Common myeloid progenitor, CD34-positive (primary cell): ENCODE measurements at regions of chr17 and their contacts with region 1.

Region 1: DNA sequence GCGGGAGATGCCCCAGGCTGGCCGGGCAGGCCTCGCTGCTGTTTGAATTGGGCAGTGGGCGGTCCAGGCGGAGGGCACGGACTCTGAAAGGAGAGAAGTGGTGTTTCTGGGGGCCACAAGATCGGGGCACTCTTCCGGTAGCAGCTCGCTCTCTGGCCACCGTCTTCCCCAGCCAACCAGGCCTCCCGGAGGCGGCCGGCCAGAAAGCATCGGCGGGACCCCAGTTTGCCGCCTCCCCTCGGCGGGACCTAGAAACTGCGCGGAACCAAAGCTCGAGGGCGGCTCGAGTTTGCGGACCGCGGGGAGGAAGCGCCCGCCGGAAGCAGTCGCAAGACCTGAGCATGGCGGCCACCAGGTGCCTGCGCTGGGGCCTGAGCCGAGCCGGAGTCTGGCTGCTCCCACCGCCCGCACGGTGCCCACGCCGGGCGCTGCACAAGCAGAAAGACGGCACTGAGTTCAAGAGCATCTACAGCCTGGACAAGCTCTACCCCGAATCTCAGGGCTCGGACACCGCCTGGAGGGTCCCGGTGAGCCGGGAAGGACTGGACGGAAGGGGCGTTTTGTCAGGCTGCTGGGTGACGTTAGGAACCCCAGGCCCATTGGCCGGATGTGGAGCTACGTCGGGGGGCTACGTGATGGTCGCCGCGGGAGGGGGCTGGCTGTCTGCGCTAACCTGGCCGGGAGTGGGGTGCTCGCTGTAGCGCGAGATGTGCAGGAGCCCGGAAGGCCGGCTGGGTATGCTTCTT is at the start of gene MRPL58:
- DNase-seq: peak; percentile 88 to 94 (median 92)
- H3K4me3 ChIP-seq: peak within 1 kb of the TSS; percentile 53 to 94 (median 87)
- H3K27ac ChIP-seq: peak within 1 kb of the TSS; percentile 76 to 84
- H3K4me1 ChIP-seq: peaks cover 8 to 29% (median 17%) of the 10 kb centered on the region in 4 experiments
- H3K27me3 ChIP-seq: no peaks in the 10 kb centered on the region

Region 2: DNA sequence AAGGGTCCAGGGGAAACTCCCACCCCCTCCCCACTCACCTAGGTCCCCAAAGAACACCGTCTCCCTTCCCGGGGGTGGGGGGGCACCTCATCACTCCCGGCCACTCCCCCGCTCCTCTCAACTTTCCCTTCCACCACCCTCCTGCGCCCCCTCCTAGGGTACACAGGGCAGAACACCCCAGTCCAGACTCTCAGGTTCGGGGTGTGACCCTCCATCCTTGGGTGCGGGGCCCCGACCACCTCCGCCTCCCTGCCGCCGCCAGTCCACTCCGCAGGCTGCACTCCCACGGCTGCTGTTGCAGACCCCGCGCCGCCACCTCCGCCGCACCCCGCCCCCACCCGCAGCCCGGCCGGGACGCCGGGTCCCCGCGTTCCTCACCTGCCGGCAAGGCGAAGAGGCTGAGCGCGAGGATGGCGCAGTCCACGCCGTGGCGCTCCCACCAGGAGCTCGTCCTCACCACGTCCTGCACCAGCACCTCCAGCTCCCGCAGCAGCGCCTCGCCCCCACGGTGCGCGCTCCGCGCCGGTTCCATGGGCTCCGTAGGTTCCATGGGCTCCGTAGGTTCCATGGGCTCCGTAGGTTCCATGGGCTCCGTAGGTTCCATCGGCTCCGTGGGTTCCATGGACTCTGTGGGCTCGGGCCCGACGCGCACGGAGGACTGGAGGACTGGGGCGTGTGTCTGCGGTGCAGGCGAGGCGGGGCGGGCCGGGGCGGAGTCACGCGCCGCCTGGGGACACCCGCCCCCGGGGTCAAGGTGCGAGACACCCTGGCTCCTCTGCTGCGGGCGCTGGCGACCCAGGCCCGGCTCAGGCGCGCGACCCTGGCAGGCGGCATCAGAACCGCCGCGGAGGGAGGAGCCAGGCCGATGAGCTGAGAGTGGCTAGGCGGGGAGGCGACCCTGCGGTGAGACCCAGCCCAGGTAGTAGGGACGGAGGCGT is 119.3 kb before region 1 on chr17 and contains the start of gene FADS6:
- CTCF ChIA-PET with region 1: no interaction called
- POLR2A ChIA-PET with region 1: no interaction called
- DNase-seq: peak in 2 of 3 donors; percentile 33 to 49
- H3K4me3 ChIP-seq: peak within 1 kb of the TSS in 6 of 7 experiments; percentile 15 to 67 (median 45)
- H3K27ac ChIP-seq: no peak within 1 kb of the TSS
- H3K4me1 ChIP-seq: peaks cover 0 to 18% (median 7%) of the 10 kb centered on the region in 4 experiments
- H3K27me3 ChIP-seq: peaks cover 0 to 53% (median 30%) of the 10 kb centered on the region in 5 experiments

Region 3: GRCh38 chr17:74987418-74987908 is 25.1 kb before region 1 on chr17 and contains the start of gene CDR2L:
- CTCF ChIA-PET with region 1: interaction called, 21 read pairs
- POLR2A ChIA-PET with region 1: interaction called, 13 read pairs
- DNase-seq: peak; percentile 92 to 94 (median 93)
- H3K4me3 ChIP-seq: peak within 1 kb of the TSS; percentile 49 to 83 (median 62)
- H3K27ac ChIP-seq: no peak within 1 kb of the TSS
- H3K4me1 ChIP-seq: peaks cover 0 to 23% (median 22%) of the 10 kb centered on the region in 4 experiments
- H3K27me3 ChIP-seq: peaks cover 0 to 28% (median 7%) of the 10 kb centered on the region in 5 experiments

Region 4: DNA sequence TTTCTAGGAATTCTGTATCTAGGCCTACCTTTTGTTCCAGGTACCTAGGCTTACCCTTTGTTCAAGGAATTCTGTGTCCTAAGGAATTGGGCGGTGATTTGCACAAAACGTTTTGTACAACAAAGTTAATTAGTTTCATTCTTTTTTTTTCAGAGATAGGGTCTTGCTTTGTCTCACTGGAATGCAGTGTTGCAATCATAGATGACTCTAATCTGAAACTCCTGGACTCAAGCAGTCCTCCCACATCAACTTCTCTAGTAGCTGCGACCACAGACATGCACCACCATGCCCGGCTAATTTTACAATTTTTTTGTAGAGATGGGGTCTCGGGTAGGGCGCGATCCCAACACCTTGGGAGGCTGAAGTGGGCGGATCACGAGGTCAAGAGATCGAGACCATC is 18.0 kb before region 1 on chr17:
- CTCF ChIA-PET with region 1: interaction called, 26 read pairs
- POLR2A ChIA-PET with region 1: no interaction called
- DNase-seq: no peak
- H3K4me3 ChIP-seq: no peak overlapping the region
- H3K27ac ChIP-seq: no peak overlapping the region
- H3K4me1 ChIP-seq: no peaks in the 10 kb centered on the region
- H3K27me3 ChIP-seq: peaks cover 0 to 12% (median 0%) of the 10 kb centered on the region in 5 experiments

Region 5: DNA sequence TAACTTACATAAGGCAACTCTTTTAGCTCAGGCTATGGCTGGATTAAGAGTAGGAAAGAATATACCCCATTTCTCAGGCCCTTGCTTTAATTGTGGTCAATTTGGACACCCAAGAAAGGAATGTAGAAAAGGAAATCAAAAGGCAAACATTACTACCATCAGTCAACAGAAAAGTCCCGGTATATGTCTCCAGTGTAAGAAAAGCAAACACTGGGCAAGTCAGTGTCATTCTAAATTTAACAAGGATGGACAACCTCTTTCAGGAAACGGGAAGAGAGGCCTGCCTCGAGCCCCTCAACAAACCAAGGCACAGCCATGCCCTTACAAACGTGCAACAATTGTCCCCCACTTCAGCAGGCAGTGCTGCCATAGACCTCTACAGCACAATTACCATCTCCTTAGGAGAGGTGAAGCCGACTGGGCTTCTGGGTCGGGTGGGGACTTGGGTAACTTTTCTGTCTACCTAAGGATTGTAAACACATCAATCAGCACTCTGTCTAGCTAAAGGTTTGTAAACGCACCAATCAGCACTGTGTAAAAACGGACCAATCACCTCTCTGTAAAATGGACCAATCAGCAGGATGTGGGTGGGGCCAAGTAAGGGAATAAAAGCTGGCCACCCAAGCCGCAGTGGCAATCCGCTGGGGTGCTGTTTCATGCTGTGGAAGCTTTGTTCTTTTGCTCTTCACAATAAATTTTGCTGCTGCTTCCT is 12.3 kb after region 1 on chr17:
- CTCF ChIA-PET with region 1: interaction called, 23 read pairs
- POLR2A ChIA-PET with region 1: interaction called, 6 read pairs
- DNase-seq: peak in 1 of 3 donors; percentile 26
- H3K4me3 ChIP-seq: no peak overlapping the region
- H3K27ac ChIP-seq: no peak overlapping the region
- H3K4me1 ChIP-seq: no peaks in the 10 kb centered on the region
- H3K27me3 ChIP-seq: no peaks in the 10 kb centered on the region

Region 6: DNA sequence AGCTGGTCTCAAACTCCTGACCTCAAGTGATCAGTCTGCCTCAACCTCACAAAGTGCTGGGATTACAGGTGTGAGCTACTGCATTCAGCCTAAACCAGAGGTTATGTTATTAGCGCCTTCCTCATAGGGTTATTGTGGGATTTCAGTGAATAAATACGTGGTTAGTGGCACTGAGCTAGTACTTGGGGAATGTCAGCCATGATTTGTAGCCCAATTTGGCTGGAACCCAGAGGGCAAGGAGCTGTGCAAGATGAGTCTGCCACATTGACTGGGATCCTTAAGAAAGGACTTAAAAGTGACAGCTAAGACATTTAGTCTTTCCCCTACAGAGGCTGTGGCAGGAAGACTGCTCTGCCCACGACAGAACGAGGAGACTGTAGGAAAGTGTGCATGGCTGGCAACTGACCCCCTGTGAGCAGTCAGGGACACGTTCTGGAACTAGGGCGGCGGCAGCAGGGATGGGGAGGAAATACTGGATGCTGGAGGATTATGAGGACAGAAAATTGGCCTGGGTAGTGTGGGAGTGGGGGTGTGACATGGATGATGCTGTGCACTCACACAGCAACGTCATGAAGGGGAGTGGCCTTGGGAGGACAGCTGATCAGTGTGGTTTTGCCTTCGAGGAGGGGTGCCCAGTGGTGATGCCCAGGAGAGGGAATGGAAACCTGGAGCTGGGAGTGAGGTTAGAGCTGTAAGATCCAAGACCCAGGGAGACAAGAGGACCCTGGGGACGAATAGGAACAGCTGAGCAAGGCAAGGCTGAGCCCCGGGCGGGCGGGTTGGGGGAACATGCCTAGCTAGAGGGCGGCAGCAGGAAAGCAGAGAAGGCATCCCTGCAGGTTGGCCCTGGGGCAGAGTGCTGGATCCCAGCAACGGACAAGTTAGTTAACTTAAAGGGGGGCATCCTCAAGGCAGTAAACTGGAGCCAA is 19.7 kb after region 1 on chr17:
- CTCF ChIA-PET with region 1: interaction called, 16 read pairs
- POLR2A ChIA-PET with region 1: interaction called, 5 read pairs
- DNase-seq: peak; percentile 72 to 86 (median 79)
- H3K4me3 ChIP-seq: peak overlapping the region; percentile 11 to 95 (median 91)
- H3K27ac ChIP-seq: no peak overlapping the region
- H3K4me1 ChIP-seq: peaks cover 4 to 43% (median 36%) of the 10 kb centered on the region in 4 experiments
- H3K27me3 ChIP-seq: no peaks in the 10 kb centered on the region

Region 7: DNA sequence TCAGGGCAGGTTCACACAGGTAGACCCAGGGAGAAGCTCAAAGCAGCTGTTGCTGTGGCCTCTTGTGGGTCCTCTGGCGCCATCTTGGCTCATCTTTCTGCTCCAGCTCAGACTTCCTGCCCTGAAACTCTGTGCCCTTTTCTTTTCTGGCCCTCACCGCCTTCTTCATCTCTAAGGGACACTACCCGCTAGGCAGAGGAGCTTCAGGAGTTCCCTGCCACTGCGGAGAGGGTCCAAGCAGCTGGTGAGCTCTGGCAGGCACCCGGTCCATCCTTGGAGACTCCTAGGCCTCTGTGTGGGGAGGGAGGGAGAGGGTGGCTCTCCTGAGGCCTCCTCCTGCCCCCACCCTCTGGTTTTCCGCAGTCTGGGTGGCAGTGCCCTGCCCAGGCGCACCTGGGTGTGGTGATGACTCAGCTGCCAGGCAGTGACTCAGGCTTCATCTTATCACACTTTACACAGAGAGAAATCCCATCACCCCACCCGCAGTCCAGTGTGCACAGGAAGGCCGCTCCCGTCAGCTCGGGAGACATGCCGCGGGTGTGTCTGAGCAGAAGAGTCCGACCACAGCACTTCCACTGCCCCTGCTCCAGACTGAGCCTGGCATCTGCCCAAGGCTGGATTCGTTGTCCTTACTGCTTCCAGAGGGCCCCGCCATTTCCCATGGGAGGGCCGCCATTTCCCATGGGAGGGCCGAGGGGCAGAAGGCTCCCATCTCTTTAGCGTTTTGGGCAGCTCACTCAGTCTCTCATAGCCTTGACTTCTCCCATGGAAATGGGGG is 111.7 kb after region 1 on chr17:
- CTCF ChIA-PET with region 1: no interaction called
- POLR2A ChIA-PET with region 1: no interaction called
- DNase-seq: peak; percentile 94 to 97 (median 96)
- H3K4me3 ChIP-seq: peak overlapping the region in 2 of 7 experiments; percentile 28 to 49
- H3K27ac ChIP-seq: peak overlapping the region; percentile 64 to 85
- H3K4me1 ChIP-seq: peaks cover 5 to 34% (median 29%) of the 10 kb centered on the region in 4 experiments
- H3K27me3 ChIP-seq: no peaks in the 10 kb centered on the region